HEK293 (cell line): ENCODE measurements at regions of chr6 and their contacts with region 1.

Region 1: GRCh38 chr6:125314019-125314581 is 12.3 kb upstream of the HDDC2 start:
- H3K4me3 ChIP-seq: no peak overlapping the region
- H3K27ac ChIP-seq: no peak overlapping the region
- H3K4me1 ChIP-seq: no peaks in the 10 kb centered on the region
- CTCF ChIP-seq: peak; percentile 87

Region 2: GRCh38 chr6:124870611-124871459 is 443.3 kb before region 1 on chr6:
- CTCF ChIA-PET with region 1: interaction called, 10 read pairs
- POLR2A ChIA-PET with region 1: no interaction called
- H3K4me3 ChIP-seq: no peak overlapping the region
- H3K27ac ChIP-seq: no peak overlapping the region
- H3K4me1 ChIP-seq: no peaks in the 10 kb centered on the region
- CTCF ChIP-seq: no peak

Region 3: DNA sequence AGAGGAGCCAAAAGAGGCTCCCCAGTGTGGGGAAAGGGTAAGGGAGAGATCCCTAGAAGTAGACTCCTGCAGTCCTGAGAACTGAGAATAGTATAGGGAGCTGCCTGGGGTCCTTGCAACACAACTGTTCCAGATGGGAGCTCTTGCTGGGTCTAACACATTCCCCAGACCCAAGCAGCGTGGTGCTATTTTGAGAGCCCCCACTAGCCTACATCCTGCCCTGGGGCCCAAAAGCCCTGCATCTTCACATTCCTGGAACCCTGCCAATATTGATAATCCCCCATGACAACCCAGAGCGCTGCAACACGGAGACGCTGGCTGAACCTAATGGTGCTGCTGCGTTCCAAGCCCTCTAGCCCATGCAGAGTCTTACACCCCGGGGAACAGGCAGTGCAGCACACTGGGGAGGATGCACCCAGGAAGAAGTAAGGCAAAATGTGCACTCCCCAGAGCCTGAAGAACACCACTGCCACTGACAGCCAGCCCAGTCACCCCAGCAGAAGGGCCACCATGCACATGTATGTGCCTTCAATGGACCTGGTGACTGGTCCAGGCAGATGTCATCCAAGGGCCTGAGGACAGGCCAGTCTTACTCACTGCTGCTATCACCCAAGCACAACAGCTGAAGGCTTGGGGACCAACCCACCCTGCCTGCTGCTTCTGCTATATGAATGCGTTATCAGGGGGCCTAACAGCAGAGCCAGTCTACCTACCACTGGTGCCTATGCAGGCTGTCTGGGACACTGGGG is 358.8 kb before region 1 on chr6:
- CTCF ChIA-PET with region 1: no interaction called
- POLR2A ChIA-PET with region 1: no interaction called
- H3K4me3 ChIP-seq: no peak overlapping the region
- H3K27ac ChIP-seq: no peak overlapping the region
- H3K4me1 ChIP-seq: no peaks in the 10 kb centered on the region; the same call in 1 of the 2 replicates
- CTCF ChIP-seq: no peak

Region 4: DNA sequence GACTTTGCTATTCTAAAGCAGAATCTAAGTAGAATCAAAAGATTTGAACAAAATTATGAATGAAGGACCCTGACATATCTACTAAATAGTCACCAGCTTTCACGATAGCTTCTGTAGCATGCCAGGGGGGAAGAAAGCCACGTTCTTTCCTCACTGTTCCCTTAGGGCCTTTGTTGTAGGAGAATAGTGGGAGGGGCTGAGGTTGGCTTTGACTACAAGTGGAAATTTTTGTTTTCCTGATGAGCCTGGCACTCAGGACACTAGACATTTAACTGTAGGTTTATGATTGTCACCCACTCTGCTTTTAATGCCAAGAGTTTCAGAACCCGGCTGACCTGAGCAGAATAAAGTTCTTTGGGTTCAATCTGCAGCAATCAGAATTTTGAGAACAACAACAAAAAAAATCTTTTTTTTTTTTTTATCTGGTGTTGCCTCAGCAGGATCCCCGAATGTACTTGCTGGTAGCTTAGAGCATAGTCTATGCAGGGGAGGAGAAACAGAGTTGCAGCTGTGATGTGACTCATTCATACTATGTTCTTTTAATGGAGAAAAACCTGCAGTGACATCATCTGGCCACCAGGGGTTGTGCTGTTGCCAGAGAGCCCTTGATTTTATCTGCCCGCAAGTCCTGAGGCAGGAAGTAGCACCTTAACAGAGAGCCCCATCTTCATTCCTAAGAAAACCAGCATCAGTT is 122.0 kb before region 1 on chr6:
- CTCF ChIA-PET with region 1: interaction called, 15 read pairs
- POLR2A ChIA-PET with region 1: no interaction called
- H3K4me3 ChIP-seq: no peak overlapping the region
- H3K27ac ChIP-seq: no peak overlapping the region
- H3K4me1 ChIP-seq: peaks cover 4% of the 10 kb centered on the region
- CTCF ChIP-seq: no peak

Region 5: GRCh38 chr6:125251516-125252220 is 62.4 kb before region 1 on chr6:
- CTCF ChIA-PET with region 1: no interaction called
- POLR2A ChIA-PET with region 1: no interaction called
- H3K4me3 ChIP-seq: no peak overlapping the region
- H3K27ac ChIP-seq: no peak overlapping the region
- H3K4me1 ChIP-seq: 0 out of 2 replicates have a peak, but pooled peaks cover 2% of the 10 kb centered on the region
- CTCF ChIP-seq: no peak

Region 6: DNA sequence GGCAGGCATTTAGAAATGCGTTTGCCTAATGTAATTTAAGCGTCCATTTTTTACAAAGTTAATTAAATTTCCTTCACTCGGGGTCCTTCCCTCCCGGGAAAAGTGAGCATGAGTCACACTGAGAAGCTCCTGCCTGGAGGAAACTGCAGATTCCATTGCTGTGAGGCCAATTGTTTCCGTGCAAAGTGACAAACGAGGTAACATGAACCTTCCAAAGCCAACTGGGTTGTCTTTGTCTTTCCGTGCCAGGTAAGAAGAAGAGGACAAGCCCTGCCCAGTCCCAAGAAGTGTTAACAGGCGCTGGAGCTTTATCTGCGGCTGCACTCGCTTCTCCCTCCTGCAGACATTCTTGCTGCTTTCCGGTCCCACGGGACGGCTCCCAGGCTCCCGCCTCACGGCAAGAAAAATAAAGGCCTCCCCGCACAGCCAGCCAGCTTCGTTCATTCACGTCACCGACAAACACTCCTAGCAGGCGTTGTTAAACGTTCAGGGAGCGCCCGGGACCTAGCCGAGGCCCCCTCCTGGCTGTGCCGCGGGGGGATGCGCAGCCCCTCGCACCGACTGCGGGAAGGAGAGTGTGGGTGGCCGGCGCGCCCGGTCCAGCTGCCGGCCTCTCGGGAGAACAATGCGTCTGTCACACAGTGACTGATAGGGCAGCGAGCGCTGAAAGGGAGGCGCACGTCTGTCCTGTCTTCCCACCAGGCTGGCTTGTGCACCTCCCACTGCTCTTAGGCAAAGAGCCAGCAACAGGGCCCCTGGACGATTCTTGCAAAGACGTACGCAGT is 49.1 kb after region 1 on chr6:
- CTCF ChIA-PET with region 1: interaction called, 15 read pairs
- POLR2A ChIA-PET with region 1: interaction called, 3 read pairs
- H3K4me3 ChIP-seq: peak overlapping the region; percentile 29
- H3K27ac ChIP-seq: peak overlapping the region; percentile 93
- H3K4me1 ChIP-seq: peaks cover 9% of the 10 kb centered on the region
- CTCF ChIP-seq: peak; percentile 74

Region 7: GRCh38 chr6:125753218-125753936 is 439.3 kb after region 1 on chr6:
- CTCF ChIA-PET with region 1: interaction called, 201 read pairs
- POLR2A ChIA-PET with region 1: no interaction called
- H3K4me3 ChIP-seq: no peak overlapping the region
- H3K27ac ChIP-seq: no peak overlapping the region
- H3K4me1 ChIP-seq: peaks cover 8% of the 10 kb centered on the region
- CTCF ChIP-seq: no peak

Region 8: DNA sequence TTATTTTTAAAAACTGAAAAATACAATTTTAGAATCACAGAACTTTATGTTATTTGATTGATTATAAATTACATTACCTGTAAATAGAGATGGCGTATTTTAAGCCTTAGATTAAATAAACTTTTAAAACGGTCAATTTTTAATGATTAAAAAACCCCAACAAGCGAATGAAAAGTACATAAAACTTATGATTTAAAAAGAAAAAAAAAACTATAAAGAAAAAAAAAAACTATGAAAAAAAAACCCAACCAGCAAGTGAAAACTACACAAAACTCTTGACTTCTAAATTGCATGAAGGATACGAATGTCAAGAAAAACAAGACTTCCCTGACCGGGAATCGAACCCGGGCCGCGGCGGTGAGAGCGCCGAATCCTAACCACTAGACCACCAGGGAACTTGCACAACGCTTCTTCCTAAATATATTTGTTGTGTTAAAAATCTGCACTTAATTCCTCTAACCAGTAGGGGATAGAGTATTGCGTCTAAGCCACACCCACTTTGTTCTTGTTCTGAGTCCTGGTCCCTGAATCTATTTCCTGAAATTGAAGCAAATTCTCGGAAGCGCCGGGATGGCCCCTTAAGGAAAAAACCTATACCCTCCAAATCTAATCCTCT is 465.9 kb after region 1 on chr6:
- CTCF ChIA-PET with region 1: interaction called, 28 read pairs
- POLR2A ChIA-PET with region 1: no interaction called
- H3K4me3 ChIP-seq: peak overlapping the region; percentile 85
- H3K27ac ChIP-seq: peak overlapping the region; percentile 83
- H3K4me1 ChIP-seq: no peaks in the 10 kb centered on the region
- CTCF ChIP-seq: peak; percentile 55; the same call in 1 of the 2 replicates

Region 9: GRCh38 chr6:126040826-126041225 is 726.7 kb after region 1 on chr6:
- CTCF ChIA-PET with region 1: no interaction called
- POLR2A ChIA-PET with region 1: no interaction called
- H3K4me3 ChIP-seq: no peak overlapping the region
- H3K27ac ChIP-seq: no peak overlapping the region
- H3K4me1 ChIP-seq: no peaks in the 10 kb centered on the region
- CTCF ChIP-seq: no peak